ENCODE measurements at regions of chr1 and their contacts with region 1.

Region 1: GRCh38 chr1:160031365-160032164 is at the start of gene PIGM:
- DNase-seq: peak; percentile 73 to 91 (median 90)
- ATAC-seq: peak; percentile 98
- H3K4me3 ChIP-seq: peak within 1 kb of the TSS; percentile 68
- H3K4me3 Mint-ChIP-seq: peak within 1 kb of the TSS; percentile 90 to 100 (median 98)
- H3K27ac ChIP-seq: peak within 1 kb of the TSS; percentile 69
- H3K27ac Mint-ChIP-seq: peak within 1 kb of the TSS; percentile 69 to 96 (median 89)
- H3K4me1 ChIP-seq: peaks cover 12 to 14% of the 10 kb centered on the region in 2 donors
- H3K4me1 Mint-ChIP-seq: peaks cover 30 to 56% (median 45%) of the 10 kb centered on the region in 7 donors
- H3K27me3 ChIP-seq: no peaks in the 10 kb centered on the region
- H3K27me3 Mint-ChIP-seq: peaks cover 0 to 18% (median 0%) of the 10 kb centered on the region in 5 donors
- total RNA-seq, gene PIGM: 4.0 to 11.4 (median 7.0) TPM

Region 2: DNA sequence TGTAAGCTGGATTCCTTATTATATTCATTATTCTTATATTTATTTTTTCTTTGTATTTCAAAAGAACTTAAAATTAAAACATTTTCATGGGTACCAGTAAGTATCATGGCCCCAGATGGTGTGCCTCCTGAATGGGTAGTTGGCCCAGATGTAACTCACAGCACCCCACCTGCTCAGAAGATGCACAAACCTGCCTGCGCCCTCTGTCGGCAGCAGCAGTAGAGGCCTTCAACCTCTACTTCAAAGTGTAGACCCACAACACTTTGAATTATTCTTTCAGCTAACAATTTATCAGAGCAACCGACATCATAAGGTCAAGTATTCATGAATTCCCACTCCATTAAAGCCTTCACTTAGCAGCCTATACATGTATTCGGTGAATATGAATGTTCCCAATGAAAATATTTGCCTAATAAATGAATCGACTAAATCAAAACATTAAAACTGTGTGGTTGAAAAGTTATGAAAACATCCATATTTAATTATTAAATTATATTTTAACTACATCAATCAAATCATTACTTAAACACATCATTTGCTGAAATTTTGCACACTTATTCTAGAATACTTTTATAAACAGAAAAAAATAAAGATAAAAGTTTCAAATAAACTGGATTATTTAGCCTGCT is 25.1 kb before region 1 on chr1:
- CTCF ChIA-PET with region 1: interaction called, 10 read pairs
- POLR2A ChIA-PET with region 1: no interaction called
- intact Hi-C with region 1: loop called in 1 of 2 experiments (anchors 1 kb)
- DNase-seq: peak; percentile 38 to 67 (median 61)
- ATAC-seq: peak; percentile 88
- H3K4me3 ChIP-seq: no peak overlapping the region
- H3K4me3 Mint-ChIP-seq: no peak overlapping the region
- H3K27ac ChIP-seq: no peak overlapping the region
- H3K27ac Mint-ChIP-seq: no peak overlapping the region
- H3K4me1 ChIP-seq: no peaks in the 10 kb centered on the region
- H3K4me1 Mint-ChIP-seq: no peaks in the 10 kb centered on the region
- H3K27me3 ChIP-seq: no peaks in the 10 kb centered on the region
- H3K27me3 Mint-ChIP-seq: peaks cover 0 to 33% (median 6%) of the 10 kb centered on the region in 5 donors

Region 3: GRCh38 chr1:160046494-160047110 is 15.0 kb after region 1 on chr1:
- CTCF ChIA-PET with region 1: interaction called, 8 read pairs
- POLR2A ChIA-PET with region 1: interaction called, 5 read pairs
- intact Hi-C with region 1: loop called in 1 of 2 experiments (anchors 1 kb)
- DNase-seq: peak in 8 of 9 donors; percentile 24 to 66 (median 44)
- ATAC-seq: peak; percentile 89
- H3K4me3 ChIP-seq: no peak overlapping the region
- H3K4me3 Mint-ChIP-seq: peak overlapping the region; percentile 62 to 86 (median 82)
- H3K27ac ChIP-seq: no peak overlapping the region
- H3K27ac Mint-ChIP-seq: peak overlapping the region in 5 of 9 donors; percentile 18 to 65 (median 43)
- H3K4me1 ChIP-seq: peaks cover 0 to 8% of the 10 kb centered on the region in 2 donors
- H3K4me1 Mint-ChIP-seq: peaks cover 7 to 16% (median 12%) of the 10 kb centered on the region in 7 donors
- H3K27me3 ChIP-seq: no peaks in the 10 kb centered on the region
- H3K27me3 Mint-ChIP-seq: peaks cover 0 to 32% (median 16%) of the 10 kb centered on the region in 5 donors

Region 4: GRCh38 chr1:160070243-160071163 is 38.9 kb after region 1 on chr1:
- CTCF ChIA-PET with region 1: no interaction called
- POLR2A ChIA-PET with region 1: interaction called, 4 read pairs
- intact Hi-C with region 1: loop called in 1 of 2 experiments (anchors 1 kb)
- DNase-seq: peak; percentile 47 to 81 (median 69)
- ATAC-seq: peak; percentile 96
- H3K4me3 ChIP-seq: peak overlapping the region; percentile 85
- H3K4me3 Mint-ChIP-seq: peak overlapping the region; percentile 88 to 100 (median 92)
- H3K27ac ChIP-seq: peak overlapping the region; percentile 51
- H3K27ac Mint-ChIP-seq: peak overlapping the region in 7 of 9 donors; percentile 18 to 78 (median 62)
- H3K4me1 ChIP-seq: peaks cover 3 to 8% of the 10 kb centered on the region in 2 donors
- H3K4me1 Mint-ChIP-seq: peaks cover 9 to 26% (median 16%) of the 10 kb centered on the region in 7 donors
- H3K27me3 ChIP-seq: peaks cover 0 to 6% of the 10 kb centered on the region in 2 donors
- H3K27me3 Mint-ChIP-seq: peaks cover 18 to 60% (median 37%) of the 10 kb centered on the region in 5 donors